Aorta (tissue), 5 donors: ENCODE measurements at regions of chr3 and their contacts with region 1.

Region 1: DNA sequence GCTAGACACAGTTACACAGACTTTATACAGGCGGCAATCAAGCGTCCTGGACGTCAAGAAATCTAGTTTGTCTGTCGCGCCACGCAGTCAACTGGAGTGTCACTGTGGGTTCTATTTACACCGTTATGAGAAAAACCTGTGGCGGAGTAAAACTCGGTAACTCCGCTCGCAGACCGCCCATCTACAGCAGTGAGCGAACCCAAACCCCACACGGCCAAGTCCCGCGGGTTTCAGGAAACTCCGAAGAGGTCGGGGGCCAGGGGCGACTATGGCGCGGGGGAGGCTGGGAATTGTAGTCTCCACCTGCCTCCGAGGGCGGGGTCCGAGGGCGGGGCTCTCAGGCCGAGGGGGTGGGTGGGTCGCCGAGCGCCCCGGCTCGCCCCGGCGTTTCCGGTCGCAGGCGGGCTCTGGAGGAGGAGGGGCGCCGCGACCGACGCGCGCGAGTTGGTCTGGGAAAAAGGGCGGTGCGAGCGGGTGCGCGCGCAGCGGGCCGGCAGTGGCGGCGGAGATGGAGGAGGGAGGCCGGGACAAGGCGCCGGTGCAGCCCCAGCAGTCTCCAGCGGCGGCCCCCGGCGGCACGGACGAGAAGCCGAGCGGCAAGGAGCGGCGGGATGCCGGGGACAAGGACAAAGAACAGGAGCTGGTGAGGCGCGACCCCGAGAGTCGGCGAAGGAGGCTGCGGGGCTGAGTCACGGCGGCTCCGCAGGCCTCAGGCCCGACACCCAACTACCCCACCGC is at the start of gene PSMD2:
- DNase-seq: peak; percentile 99
- ATAC-seq: peak; percentile 100
- H3K4me3 ChIP-seq: peak within 1 kb of the TSS; percentile 65 to 74
- H3K27ac ChIP-seq: peak within 1 kb of the TSS in 1 of 2 donors; percentile 83
- H3K4me1 ChIP-seq: peaks cover 0 to 1% of the 10 kb centered on the region in 2 donors
- H3K27me3 ChIP-seq: no peaks in the 10 kb centered on the region
- total RNA-seq, gene PSMD2: 139 to 143 TPM

Region 2: DNA sequence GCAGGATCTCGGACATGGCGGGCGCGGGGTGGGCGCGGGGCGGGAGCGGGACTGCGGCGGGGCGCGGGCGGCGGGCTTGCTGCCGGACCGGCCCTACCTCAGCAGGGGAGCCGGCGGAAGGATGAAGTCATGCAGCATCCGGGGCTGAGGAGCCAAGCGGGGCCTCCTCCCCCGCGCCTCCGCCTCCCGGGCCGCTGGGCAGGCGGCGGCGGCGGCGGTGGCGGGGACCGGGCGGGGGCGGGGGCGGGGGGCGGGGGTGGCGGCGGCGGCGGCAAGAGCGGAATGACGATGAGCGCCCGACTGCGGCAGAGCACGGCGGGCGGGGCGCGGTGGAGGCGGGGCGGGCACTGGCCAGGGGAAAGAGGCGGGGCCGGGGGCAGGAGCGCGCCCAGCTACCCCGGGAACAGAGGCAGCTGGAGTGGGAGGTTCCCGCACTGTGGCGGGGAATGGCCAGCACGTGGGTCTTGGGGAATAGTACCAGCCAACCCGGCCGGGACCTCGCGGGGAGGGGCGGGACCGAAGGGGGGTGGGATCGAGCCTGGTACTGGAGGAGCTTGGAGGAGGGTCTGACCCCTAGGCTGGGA is 37.6 kb before region 1 on chr3 and contains the start of gene CAMK2N2:
- intact Hi-C with region 1: loop called in 1 of 2 experiments (anchors 5 kb)
- DNase-seq: peak; percentile 64 to 85
- ATAC-seq: no peak
- H3K4me3 ChIP-seq: peak within 1 kb of the TSS; percentile 47 to 52
- H3K27ac ChIP-seq: no peak within 1 kb of the TSS
- H3K4me1 ChIP-seq: no peaks in the 10 kb centered on the region
- H3K27me3 ChIP-seq: peaks cover 0 to 2% of the 10 kb centered on the region in 2 donors
- total RNA-seq, gene CAMK2N2: 0.26 to 0.36 TPM

Region 3: DNA sequence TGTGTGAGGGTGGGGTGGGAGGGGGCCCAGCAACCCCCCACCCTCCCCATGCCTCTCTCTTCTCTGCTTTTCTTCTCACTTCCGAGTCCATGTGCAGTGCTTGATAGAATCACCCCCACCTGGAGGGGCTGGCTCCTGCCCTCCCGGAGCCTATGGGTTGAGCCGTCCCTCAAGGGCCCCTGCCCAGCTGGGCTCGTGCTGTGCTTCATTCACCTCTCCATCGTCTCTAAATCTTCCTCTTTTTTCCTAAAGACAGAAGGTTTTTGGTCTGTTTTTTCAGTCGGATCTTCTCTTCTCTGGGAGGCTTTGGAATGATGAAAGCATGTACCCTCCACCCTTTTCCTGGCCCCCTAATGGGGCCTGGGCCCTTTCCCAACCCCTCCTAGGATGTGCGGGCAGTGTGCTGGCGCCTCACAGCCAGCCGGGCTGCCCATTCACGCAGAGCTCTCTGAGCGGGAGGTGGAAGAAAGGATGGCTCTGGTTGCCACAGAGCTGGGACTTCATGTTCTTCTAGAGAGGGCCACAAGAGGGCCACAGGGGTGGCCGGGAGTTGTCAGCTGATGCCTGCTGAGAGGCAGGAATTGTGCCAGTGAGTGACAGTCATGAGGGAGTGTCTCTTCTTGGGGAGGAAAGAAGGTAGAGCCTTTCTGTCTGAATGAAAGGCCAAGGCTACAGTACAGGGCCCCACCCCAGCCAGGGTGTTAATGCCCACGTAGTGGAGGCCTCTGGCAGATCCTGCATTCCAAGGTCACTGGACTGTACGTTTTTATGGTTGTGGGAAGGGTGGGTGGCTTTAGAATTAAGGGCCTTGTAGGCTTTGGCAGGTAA is 46.6 kb after region 1 on chr3:
- intact Hi-C with region 1: no loop called
- DNase-seq: peak in 1 of 2 donors; percentile 63
- ATAC-seq: peak; percentile 23
- H3K4me3 ChIP-seq: no peak overlapping the region
- H3K27ac ChIP-seq: no peak overlapping the region
- H3K4me1 ChIP-seq: no peaks in the 10 kb centered on the region
- H3K27me3 ChIP-seq: no peaks in the 10 kb centered on the region

Region 4: DNA sequence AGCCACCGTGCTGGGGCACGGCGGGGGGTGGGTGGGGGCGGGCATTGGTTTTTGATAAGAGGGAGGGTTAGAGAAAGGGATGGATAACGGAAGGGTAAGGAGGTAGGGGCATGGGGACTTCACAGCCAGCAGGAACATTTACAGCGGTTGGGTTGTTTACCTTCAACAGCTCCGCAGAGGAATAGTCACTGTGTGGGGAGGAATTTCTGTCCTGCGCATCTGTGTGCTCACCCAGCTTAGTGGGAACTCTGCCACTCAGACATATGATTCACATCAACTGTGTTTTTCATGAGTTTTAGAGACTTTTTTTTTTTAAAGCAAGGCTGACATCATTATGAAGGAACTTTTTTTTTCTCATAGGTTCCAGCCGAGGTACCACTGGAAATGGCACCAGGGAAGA is 100.5 kb after region 1 on chr3:
- intact Hi-C with region 1: no loop called
- DNase-seq: peak in 1 of 2 donors; percentile 9
- ATAC-seq: peak; percentile 53
- H3K4me3 ChIP-seq: no peak overlapping the region
- H3K27ac ChIP-seq: no peak overlapping the region
- H3K4me1 ChIP-seq: no peaks in the 10 kb centered on the region
- H3K27me3 ChIP-seq: no peaks in the 10 kb centered on the region